Aorta (tissue), 5 donors: ENCODE measurements at regions of chr13 and their contacts with region 1.

Region 1: DNA sequence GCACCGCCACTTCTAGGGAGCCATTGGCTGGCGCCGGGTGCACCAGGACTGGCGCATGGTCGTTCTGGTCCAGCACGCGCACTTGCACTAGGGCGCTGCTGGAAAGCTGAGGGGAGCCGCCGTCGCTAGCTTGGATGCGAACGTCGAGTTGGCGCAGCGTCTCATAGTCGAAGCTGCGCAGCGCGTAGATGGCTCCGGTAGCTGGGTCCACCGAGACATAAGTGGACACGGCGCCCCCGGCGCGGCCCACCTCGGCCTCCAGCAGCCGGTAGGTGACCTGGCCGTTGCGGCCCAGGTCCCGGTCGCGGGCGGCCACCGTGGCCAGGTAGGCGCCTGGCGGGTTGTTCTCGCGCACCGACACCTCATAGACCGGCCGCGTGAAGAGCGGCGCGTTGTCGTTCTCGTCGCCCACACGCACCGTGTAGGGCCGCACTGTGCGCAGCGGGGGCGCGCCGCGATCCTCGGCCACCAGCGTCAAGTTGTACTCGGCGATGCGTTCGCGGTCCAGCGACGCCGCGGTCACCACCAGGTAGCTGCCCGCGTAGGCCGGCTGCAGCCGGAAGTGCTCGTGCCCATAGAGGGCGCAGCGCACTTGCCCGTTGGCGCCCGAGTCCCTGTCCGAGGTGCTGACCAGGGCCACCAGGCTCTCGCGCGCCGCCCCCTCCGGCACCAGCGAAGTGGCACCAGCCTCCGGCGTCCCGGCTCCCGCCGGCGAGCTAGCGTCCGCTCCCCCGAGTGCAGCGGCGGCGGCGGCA is 1.7 kb downstream of the PCDH8 start:
- DNase-seq: peak; percentile 70 to 85
- ATAC-seq: peak; percentile 70
- H3K4me3 ChIP-seq: no peak overlapping the region
- H3K27ac ChIP-seq: no peak overlapping the region
- H3K4me1 ChIP-seq: no peaks in the 10 kb centered on the region
- H3K27me3 ChIP-seq: no peaks in the 10 kb centered on the region

Region 2: DNA sequence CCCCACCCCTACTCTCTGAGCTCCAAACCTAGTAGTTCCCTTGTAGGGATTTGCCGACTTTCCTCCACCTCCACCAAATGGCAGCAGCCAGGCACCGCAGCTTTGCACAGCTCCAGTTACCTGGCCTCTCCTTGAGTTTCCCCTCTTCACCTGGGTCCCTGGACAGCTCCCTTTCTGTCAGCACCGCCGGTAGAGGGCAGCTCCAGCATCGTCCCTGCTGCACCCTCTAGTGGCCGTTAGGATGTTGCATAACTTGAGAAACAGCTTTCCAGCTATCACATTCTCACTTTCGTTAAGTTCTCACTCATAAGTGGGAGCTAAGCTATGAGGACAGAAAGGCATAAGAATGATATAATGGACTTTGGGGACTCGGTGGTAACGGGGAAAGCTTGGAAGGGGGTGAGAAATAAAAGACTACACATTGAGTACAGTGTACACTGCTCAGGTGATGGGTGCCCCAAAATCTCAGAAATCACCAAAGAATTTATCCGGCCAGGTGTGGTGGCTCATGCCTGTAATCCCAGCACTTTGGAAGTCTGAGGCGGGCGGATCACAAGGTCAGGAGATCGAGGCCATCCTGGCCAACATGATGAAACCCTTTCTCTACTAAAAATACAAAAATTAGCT is 121.4 kb after region 1 on chr13:
- intact Hi-C with region 1: loop called in 1 of 2 experiments (anchors 5 kb)
- DNase-seq: peak; percentile 74 to 80
- ATAC-seq: peak; percentile 83
- H3K4me3 ChIP-seq: no peak overlapping the region
- H3K27ac ChIP-seq: no peak overlapping the region
- H3K4me1 ChIP-seq: no peaks in the 10 kb centered on the region
- H3K27me3 ChIP-seq: no peaks in the 10 kb centered on the region